Activated T-helper 1 cell treated with anti-CD3 and anti-CD28 coated beads, Interleukin-12 subunit alpha, Interleukin-12 subunit beta, Interleukin-2, Interleukin-4 antibody, amounts not matched to agents 30 ng/mL and 10 ng/mL and 1 ng/mL, durations not matched to agents 14 hours and 24 hours and 36 hours (primary cell): ENCODE measurements at regions of chr2 and their contacts with region 1.

Region 1: DNA sequence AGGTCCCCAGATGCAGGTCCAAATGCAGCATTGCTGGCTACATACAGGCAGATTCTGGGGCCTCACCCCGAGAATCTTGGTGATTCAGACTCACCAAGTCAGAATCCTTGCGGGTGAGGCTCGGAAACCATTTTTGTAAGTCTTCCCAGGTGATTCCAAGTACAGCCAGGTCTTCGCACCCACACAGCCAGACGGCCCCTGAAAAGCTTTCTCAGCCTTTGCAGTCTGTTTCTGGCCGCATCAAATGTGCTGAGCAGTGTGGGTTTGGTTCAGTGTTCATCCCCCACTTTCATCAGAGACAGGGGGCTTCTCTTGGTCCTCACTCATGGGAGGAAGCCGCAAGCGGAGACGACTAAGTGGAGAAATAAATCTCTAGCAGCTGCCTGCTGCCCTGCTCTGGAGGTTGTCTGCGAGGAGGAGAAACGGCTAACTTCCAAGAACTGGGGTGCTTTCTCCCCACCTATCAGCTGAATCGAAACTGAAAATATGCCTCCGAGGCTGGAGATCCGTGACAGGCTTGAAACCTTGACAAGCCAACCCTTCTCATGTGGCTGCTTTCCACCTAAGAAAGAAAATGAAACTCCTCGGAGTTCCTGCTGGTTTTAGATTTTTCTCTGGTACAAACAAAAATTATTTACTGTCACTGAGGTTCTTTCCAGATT is 8.9 kb upstream of the TMEM185B start:
- DNase-seq: peak; percentile 81
- H3K4me3 Mint-ChIP-seq: peak overlapping the region; percentile 91
- H3K27ac Mint-ChIP-seq: peak overlapping the region; percentile 98
- H3K4me1 Mint-ChIP-seq: peaks cover 59% of the 10 kb centered on the region
- H3K27me3 Mint-ChIP-seq: no peaks in the 10 kb centered on the region

Region 2: GRCh38 chr2:119862127-119862889 is 369.8 kb before region 1 on chr2:
- intact Hi-C with region 1: loop called (anchors 5 kb)
- DNase-seq: no peak
- H3K4me3 Mint-ChIP-seq: peak overlapping the region; percentile 34
- H3K27ac Mint-ChIP-seq: peak overlapping the region; percentile 74
- H3K4me1 Mint-ChIP-seq: peaks cover 43% of the 10 kb centered on the region
- H3K27me3 Mint-ChIP-seq: peaks cover 3% of the 10 kb centered on the region

Region 3: GRCh38 chr2:120245354-120245791 is 13.3 kb after region 1 on chr2:
- intact Hi-C with region 1: no loop called
- DNase-seq: no peak
- H3K4me3 Mint-ChIP-seq: no peak overlapping the region
- H3K27ac Mint-ChIP-seq: no peak overlapping the region
- H3K4me1 Mint-ChIP-seq: peaks cover 39% of the 10 kb centered on the region
- H3K27me3 Mint-ChIP-seq: peaks cover 12% of the 10 kb centered on the region

Region 4: GRCh38 chr2:120261387-120262006 is 29.4 kb after region 1 on chr2:
- intact Hi-C with region 1: loop called (anchors 1 kb)
- DNase-seq: peak; percentile 56
- H3K4me3 Mint-ChIP-seq: no peak overlapping the region
- H3K27ac Mint-ChIP-seq: no peak overlapping the region
- H3K4me1 Mint-ChIP-seq: peaks cover 38% of the 10 kb centered on the region
- H3K27me3 Mint-ChIP-seq: no peaks in the 10 kb centered on the region

Region 5: GRCh38 chr2:120267348-120267747 is 35.2 kb after region 1 on chr2:
- intact Hi-C with region 1: loop called (anchors 1 kb)
- DNase-seq: no peak
- H3K4me3 Mint-ChIP-seq: no peak overlapping the region
- H3K27ac Mint-ChIP-seq: peak overlapping the region; percentile 86
- H3K4me1 Mint-ChIP-seq: peaks cover 54% of the 10 kb centered on the region
- H3K27me3 Mint-ChIP-seq: no peaks in the 10 kb centered on the region

Region 6: GRCh38 chr2:120287183-120288015 is 55.3 kb after region 1 on chr2:
- intact Hi-C with region 1: loop called (anchors 1 kb)
- DNase-seq: no peak
- H3K4me3 Mint-ChIP-seq: peak overlapping the region; percentile 30
- H3K27ac Mint-ChIP-seq: peak overlapping the region; percentile 90
- H3K4me1 Mint-ChIP-seq: peaks cover 76% of the 10 kb centered on the region
- H3K27me3 Mint-ChIP-seq: no peaks in the 10 kb centered on the region

Region 7: GRCh38 chr2:120343433-120344105 is 111.5 kb after region 1 on chr2:
- intact Hi-C with region 1: no loop called
- DNase-seq: peak; percentile 40
- H3K4me3 Mint-ChIP-seq: peak overlapping the region; percentile 33
- H3K27ac Mint-ChIP-seq: no peak overlapping the region
- H3K4me1 Mint-ChIP-seq: peaks cover 13% of the 10 kb centered on the region
- H3K27me3 Mint-ChIP-seq: peaks cover 61% of the 10 kb centered on the region